Activated T-helper 1 cell treated with anti-CD3 and anti-CD28 coated beads, Interleukin-12 subunit alpha, Interleukin-12 subunit beta, Interleukin-2, Interleukin-4 antibody, amounts not matched to agents 30 ng/mL and 10 ng/mL and 1 ng/mL, durations not matched to agents 14 hours and 24 hours and 36 hours (primary cell): ENCODE measurements at regions of chr1 and their contacts with region 1.

Region 1: DNA sequence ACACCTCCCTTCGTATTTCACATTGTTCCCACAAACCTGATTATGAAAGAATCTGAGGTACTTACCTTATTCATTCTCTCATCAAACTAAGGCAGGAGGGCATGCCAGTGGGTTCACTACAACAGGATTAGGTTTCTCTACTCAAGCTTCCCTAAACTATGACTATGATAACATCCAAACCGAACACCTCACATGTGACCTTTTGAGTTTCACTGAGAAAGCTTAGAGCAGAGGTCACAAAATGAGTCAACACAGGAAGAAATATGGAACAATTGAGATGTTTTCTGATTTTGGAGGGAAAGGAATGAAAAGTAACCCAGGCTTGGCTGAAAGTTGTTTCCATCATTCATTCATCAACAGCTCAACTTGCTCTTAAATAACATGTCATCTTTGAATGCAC is 24.1 kb downstream of the UBR4 start:
- DNase-seq: no peak
- H3K4me3 Mint-ChIP-seq: peak overlapping the region; percentile 46
- H3K27ac Mint-ChIP-seq: peak overlapping the region; percentile 89
- H3K4me1 Mint-ChIP-seq: peaks cover 18% of the 10 kb centered on the region
- H3K27me3 Mint-ChIP-seq: no peaks in the 10 kb centered on the region

Region 2: GRCh38 chr1:19204446-19205266 is 18.7 kb after region 1 on chr1:
- intact Hi-C with region 1: loop called (anchors 1 kb)
- DNase-seq: no peak
- H3K4me3 Mint-ChIP-seq: no peak overlapping the region
- H3K27ac Mint-ChIP-seq: peak overlapping the region; percentile 1
- H3K4me1 Mint-ChIP-seq: peaks cover 47% of the 10 kb centered on the region
- H3K27me3 Mint-ChIP-seq: no peaks in the 10 kb centered on the region

Region 3: DNA sequence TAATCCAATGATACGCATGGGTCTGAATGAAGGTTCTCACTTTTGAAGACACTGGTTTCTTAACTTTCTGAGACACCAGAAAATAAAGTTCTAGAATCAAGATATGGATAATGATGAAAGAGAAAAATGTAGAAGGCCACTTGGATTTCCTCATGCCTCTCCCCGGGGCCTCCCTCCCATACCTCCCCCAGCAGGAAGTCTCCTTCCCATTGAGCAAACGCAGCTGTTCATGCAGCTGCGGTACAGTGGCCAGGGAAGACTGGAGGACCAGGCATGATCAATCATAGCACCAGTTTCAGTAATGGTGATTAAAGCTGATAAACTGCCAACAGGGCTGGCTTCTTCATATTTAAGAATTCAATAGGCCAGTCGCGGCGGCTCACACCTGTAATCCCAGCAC is 35.0 kb after region 1 on chr1:
- intact Hi-C with region 1: no loop called
- DNase-seq: no peak
- H3K4me3 Mint-ChIP-seq: no peak overlapping the region
- H3K27ac Mint-ChIP-seq: no peak overlapping the region
- H3K4me1 Mint-ChIP-seq: peaks cover 15% of the 10 kb centered on the region
- H3K27me3 Mint-ChIP-seq: no peaks in the 10 kb centered on the region